Sigmoid colon (tissue), 7 donors: ENCODE measurements at regions of chr2 and their contacts with region 1.

Region 1: DNA sequence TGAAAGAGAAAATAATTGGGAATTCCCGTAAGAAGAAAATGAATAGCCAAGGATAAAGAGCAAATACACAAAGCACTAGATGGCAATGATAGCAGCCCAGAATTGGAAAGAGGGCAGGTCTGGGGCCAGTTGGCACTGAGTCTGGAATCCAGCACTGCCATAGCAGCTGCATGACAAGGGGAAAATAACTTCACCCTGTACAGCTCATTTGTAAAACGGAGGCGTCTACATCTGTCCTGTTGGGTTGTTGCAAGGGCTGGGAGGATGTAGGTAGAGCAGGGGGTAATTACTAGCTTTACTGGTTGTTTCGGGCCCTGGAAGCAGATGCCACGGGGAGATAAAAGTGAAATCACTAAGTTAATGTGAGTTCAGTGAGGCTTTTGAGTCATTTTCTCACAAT is 110.0 kb upstream of the RASGRP3 start:
- DNase-seq: peak; percentile 72
- H3K4me3 ChIP-seq: no peak overlapping the region
- H3K27ac ChIP-seq: peak overlapping the region; percentile 39 to 81 (median 68)
- H3K4me1 ChIP-seq: peaks cover 0 to 37% (median 21%) of the 10 kb centered on the region in 4 donors
- H3K27me3 ChIP-seq: no peaks in the 10 kb centered on the region
- CTCF ChIP-seq: no peak
- EP300 ChIP-seq: no peak
- POLR2A ChIP-seq: no peak

Region 2: DNA sequence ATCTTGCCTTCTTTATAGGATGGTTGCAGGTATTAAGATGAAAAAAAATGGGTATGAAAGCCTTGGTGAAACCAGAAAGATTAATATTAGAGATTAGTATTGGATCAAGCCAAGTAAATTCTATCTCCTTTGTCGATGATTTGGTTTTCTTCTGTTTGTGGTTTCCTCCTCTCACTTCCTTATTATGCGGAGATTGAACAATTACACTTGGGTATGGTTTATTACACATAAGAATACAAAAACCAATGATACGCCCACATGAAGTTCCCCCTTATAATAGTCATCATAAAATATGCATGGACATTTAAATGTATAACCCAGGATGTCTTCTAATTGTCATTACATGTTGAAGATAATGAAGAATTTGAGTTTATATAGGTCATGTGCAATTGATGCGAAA is 414.8 kb before region 1 on chr2:
- intact Hi-C with region 1: loop called (anchors 10 kb)
- DNase-seq: no peak
- H3K4me3 ChIP-seq: no peak overlapping the region
- H3K27ac ChIP-seq: no peak overlapping the region
- H3K4me1 ChIP-seq: peaks cover 0 to 26% (median 5%) of the 10 kb centered on the region in 4 donors
- H3K27me3 ChIP-seq: no peaks in the 10 kb centered on the region
- CTCF ChIP-seq: no peak
- EP300 ChIP-seq: no peak
- POLR2A ChIP-seq: no peak

Region 3: GRCh38 chr2:33497221-33497650 is 130.8 kb after region 1 on chr2:
- intact Hi-C with region 1: no loop called
- DNase-seq: no peak
- H3K4me3 ChIP-seq: no peak overlapping the region
- H3K27ac ChIP-seq: no peak overlapping the region
- H3K4me1 ChIP-seq: no peaks in the 10 kb centered on the region
- H3K27me3 ChIP-seq: no peaks in the 10 kb centered on the region
- CTCF ChIP-seq: no peak
- EP300 ChIP-seq: no peak
- POLR2A ChIP-seq: no peak